ENCODE measurements at regions of chr10 and their contacts with region 1.

Region 1: GRCh38 chr10:102450194-102450938 is 977 bp downstream of the C10orf95 start:
- DNase-seq: peak; percentile 85 to 95 (median 88)
- ATAC-seq: peak; percentile 86 to 87
- H3K4me3 Mint-ChIP-seq: peak overlapping the region; percentile 89 to 97 (median 93)
- H3K27ac Mint-ChIP-seq: peak overlapping the region; percentile 79 to 98 (median 95)
- H3K4me1 Mint-ChIP-seq: peaks cover 10 to 32% (median 28%) of the 10 kb centered on the region in 4 donors
- H3K27me3 Mint-ChIP-seq: no peaks in the 10 kb centered on the region

Region 2: DNA sequence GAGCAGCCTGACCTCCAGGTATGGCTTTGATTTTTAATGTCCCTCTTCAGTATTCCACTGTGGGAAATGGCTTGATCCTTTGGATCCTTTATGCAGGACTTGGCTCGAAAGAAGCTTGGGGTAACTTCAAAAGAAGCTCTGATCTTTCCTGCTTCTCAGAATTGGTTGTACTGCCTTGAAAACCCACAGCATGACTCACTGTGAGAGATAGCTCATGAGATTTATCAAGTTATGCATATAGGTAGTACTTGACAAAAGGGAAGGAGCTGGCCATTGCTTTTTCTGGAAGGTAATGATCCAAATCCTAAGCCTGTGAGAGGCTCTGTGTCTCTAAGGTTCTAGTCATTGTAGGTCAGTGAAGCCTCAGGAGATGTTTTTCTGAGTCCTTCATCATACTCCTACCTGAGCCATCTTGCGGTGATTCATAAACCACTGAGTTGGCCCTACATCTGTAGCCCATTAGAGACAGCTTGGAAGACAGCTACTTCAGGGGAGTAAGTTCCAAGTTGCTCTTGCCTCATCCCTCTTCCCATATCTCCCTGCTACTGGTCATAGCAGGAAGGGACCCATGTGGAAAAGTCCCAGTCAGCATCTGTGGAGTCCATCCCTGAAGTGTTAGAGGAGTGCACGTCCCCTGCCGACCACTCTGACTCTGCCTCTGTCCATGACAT is 91.5 kb before region 1 on chr10:
- POLR2A ChIA-PET with region 1: no interaction called
- DNase-seq: no peak
- ATAC-seq: no peak
- H3K4me3 Mint-ChIP-seq: no peak overlapping the region
- H3K27ac Mint-ChIP-seq: no peak overlapping the region
- H3K4me1 Mint-ChIP-seq: peaks cover 0 to 5% (median 0%) of the 10 kb centered on the region in 4 donors
- H3K27me3 Mint-ChIP-seq: no peaks in the 10 kb centered on the region

Region 3: GRCh38 chr10:102408728-102409603 is 41.4 kb before region 1 on chr10:
- POLR2A ChIA-PET with region 1: interaction called, 22 read pairs
- DNase-seq: peak in 9 of 10 donors; percentile 60 to 91 (median 81)
- ATAC-seq: peak; percentile 75 to 81
- H3K4me3 Mint-ChIP-seq: peak overlapping the region; percentile 71 to 91 (median 86)
- H3K27ac Mint-ChIP-seq: peak overlapping the region; percentile 64 to 96 (median 89)
- H3K4me1 Mint-ChIP-seq: peaks cover 28 to 57% (median 40%) of the 10 kb centered on the region in 4 donors
- H3K27me3 Mint-ChIP-seq: peaks cover 0 to 27% (median 0%) of the 10 kb centered on the region in 5 donors

Region 4: DNA sequence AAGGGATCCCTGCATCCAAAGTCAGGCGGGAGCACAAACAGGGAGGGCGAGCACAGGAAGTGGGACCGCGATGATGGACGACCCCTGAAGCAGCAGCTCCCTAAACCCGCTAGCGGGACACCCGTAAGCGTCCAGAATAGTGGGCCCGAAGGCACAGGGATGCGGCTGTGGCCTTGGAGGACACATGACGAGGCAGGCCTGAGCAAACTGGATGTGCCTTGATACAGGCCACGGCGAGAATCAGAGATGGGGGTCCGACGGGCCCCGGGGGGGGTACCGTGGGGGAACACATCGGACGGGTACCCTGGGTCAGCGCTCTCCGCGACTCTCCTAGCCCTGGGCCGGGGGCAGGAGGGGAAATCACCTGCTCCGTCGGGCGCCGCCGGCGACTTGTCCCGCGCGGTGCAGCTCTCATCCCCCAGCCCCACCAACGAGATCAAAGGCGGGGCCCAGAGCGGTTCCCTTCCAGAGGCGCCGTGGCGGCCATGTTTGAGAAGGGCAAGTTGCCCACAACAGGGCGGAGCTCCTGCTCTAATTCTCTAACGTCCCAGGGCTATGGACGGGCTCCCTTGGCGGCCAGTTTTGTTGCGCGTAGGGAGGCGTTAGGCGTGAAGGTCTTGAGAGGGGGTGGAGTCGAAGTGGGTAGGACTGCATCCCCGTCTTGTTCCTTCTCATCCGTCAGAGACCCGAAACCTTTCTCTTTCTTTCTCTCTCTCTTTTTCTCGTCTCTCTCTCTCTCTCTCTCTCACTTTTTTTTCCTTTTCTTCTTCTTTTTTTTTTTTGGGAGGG is 18.0 kb before region 1 on chr10 and contains the start of gene CUEDC2:
- POLR2A ChIA-PET with region 1: interaction called, 184 read pairs
- DNase-seq: peak; percentile 87 to 97 (median 92)
- ATAC-seq: peak; percentile 89 to 91
- H3K4me3 Mint-ChIP-seq: peak within 1 kb of the TSS; percentile 89 to 97 (median 94)
- H3K27ac Mint-ChIP-seq: peak within 1 kb of the TSS; percentile 89 to 99 (median 96)
- H3K4me1 Mint-ChIP-seq: peaks cover 29 to 57% (median 54%) of the 10 kb centered on the region in 4 donors
- H3K27me3 Mint-ChIP-seq: peaks cover 0 to 2% (median 0%) of the 10 kb centered on the region in 5 donors
- polyA plus RNA-seq, gene CUEDC2: 60.6 to 76.9 (median 70.8) TPM

Region 5: GRCh38 chr10:102476466-102477141 is 26.2 kb after region 1 on chr10:
- POLR2A ChIA-PET with region 1: interaction called, 59 read pairs
- DNase-seq: peak in 6 of 10 donors; percentile 17 to 69 (median 44)
- ATAC-seq: peak; percentile 29 to 44
- H3K4me3 Mint-ChIP-seq: peak overlapping the region in 6 of 10 donors; percentile 28 to 65 (median 44)
- H3K27ac Mint-ChIP-seq: peak overlapping the region; percentile 70 to 94 (median 88)
- H3K4me1 Mint-ChIP-seq: peaks cover 24 to 54% (median 44%) of the 10 kb centered on the region in 4 donors
- H3K27me3 Mint-ChIP-seq: no peaks in the 10 kb centered on the region

Region 6: DNA sequence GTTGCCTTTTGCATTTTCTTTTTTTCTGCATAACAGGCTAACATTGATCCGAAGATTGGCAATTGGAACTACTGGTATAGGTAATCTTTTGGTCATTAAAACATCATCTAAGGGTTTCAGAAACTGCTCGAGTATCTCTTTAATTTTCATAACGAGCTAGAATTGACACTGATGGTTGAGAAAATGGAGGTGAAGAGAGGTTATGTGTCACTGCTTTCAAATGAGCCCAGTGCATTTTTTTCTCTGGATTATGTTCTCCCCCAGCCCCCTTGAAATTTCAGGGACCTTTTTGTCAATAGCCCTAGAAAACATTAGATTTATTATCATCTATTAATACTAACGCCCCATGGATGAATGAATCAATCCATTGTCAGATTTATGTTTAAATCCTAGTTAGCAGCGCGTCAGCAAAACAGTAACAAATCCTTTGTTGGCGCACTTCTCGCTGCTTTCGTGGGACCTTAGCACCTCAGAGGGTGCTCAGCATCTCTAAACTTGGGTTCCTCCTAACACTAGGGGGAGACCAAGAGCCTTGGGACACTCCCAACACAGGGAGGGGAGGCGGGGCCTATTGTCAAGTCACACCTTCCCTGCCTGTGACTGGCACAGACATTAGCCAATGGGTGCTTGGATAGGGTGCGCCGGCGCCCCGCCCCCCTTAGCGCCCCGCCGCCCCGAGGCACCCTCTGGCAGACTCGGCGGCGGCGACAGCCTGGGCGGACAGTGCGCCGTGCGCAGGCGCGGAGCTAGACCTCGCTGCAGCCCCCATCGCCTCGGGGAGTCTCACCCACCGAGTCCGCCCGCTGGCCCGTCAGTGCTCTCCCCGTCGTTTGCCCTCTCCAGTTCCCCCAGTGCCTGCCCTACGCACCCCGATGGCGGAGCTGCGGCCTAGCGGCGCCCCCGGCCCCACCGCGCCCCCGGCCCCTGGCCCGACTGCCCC is 53.2 kb after region 1 on chr10 and contains the start of gene SUFU:
- POLR2A ChIA-PET with region 1: interaction called, 29 read pairs
- DNase-seq: peak; percentile 96 to 100 (median 98)
- ATAC-seq: peak; percentile 68 to 69
- H3K4me3 Mint-ChIP-seq: no peak within 1 kb of the TSS
- H3K27ac Mint-ChIP-seq: peak within 1 kb of the TSS in 8 of 10 donors; percentile 63 to 94 (median 88)
- H3K4me1 Mint-ChIP-seq: peaks cover 22 to 42% (median 35%) of the 10 kb centered on the region in 4 donors
- H3K27me3 Mint-ChIP-seq: no peaks in the 10 kb centered on the region
- polyA plus RNA-seq, gene SUFU: 2.3 to 7.4 (median 3.0) TPM